ENCODE measurements at regions of chr1 and their contacts with region 1.

Region 1: DNA sequence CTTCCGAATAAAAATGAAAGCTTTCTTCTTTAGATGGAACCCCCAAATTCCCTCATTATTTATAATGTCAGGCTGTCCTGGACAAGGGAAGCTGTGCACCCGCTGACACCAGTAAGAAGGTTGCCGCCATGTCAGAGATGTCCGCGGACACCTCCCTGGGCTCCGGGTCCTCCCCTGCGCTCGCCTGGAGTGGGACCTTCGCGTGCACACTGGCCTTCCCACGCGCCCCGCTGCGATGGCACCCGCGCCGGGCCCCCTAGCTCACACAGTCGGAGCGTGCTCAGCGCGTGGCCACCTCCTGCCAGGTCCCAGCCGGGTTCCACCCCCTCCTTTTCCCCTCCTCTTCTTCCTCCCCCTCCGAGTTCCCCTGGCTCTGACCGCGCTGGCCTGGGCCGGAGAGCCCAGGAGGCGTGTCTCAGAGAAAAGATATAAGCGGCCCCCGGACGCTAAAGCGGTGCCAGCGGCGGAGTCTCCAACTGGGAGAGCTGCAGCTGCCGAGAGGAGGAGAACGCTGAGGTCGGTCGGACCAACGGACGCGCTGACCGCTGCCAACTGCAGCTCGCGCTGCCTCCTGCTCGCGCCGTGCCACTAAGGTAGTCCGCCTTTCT is at the start of gene G0S2:
- DNase-seq: peak; percentile 46
- H3K4me3 Mint-ChIP-seq: peak within 1 kb of the TSS; percentile 80
- H3K27ac Mint-ChIP-seq: peak within 1 kb of the TSS; percentile 57
- H3K4me1 Mint-ChIP-seq: peaks cover 54% of the 10 kb centered on the region
- H3K27me3 Mint-ChIP-seq: peaks cover 30% of the 10 kb centered on the region
- CTCF ChIP-seq: no peak
- total RNA-seq, gene G0S2: 2.4 and 4.0 TPM in 2 replicates

Region 2: GRCh38 chr1:209710093-209710492 is 35.0 kb after region 1 on chr1:
- CTCF ChIA-PET with region 1: no interaction called
- intact Hi-C with region 1: no loop called
- DNase-seq: no peak
- H3K4me3 Mint-ChIP-seq: no peak overlapping the region
- H3K27ac Mint-ChIP-seq: no peak overlapping the region
- H3K4me1 Mint-ChIP-seq: peaks cover 39% of the 10 kb centered on the region
- H3K27me3 Mint-ChIP-seq: no peaks in the 10 kb centered on the region
- CTCF ChIP-seq: no peak

Region 3: DNA sequence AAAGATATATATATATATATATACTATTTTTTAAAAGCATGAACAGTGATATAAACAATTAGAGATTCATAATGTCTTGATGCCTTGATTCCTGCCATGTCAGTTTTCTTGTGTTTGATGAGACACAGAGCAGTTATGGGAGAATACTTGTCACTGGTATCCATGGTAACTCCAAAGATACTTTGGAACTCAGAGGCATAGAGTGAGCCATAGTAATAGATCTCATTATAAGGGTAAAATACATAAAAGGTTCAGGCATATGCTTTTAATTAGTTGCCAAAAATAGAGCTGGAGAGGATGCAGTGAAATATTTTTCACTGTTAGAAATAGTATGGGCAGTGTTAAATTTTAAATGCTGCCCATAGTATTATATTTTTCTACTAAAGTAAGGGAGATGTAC is 397.1 kb after region 1 on chr1:
- CTCF ChIA-PET with region 1: no interaction called
- intact Hi-C with region 1: no loop called
- DNase-seq: no peak
- H3K4me3 Mint-ChIP-seq: no peak overlapping the region
- H3K27ac Mint-ChIP-seq: no peak overlapping the region
- H3K4me1 Mint-ChIP-seq: no peaks in the 10 kb centered on the region
- H3K27me3 Mint-ChIP-seq: no peaks in the 10 kb centered on the region
- CTCF ChIP-seq: no peak

Region 4: DNA sequence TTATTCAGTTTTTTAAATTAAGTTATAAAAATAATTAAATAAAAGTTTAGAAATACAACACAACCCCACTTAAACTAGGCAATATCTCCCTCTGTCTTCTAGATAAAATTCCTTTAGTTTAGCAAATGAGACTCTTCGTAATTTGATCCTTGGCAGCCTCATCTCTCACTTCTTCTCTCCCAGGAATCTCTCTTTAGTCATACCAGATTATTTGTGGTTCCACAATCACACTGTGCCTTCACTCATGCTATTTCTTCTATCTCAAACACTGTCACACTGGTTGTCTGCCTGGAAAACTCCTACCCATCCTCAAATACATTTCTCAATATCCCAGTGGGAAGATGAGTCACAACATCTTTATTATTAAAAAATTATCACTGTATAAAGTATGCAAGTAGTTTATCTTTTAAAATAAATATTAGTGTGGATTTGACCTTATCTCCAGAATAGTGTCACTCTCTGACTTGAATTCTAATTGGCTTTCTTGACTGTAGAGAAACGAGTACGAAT is 1263.4 kb after region 1 on chr1:
- CTCF ChIA-PET with region 1: no interaction called
- intact Hi-C with region 1: loop called (anchors 10 kb)
- DNase-seq: no peak
- H3K4me3 Mint-ChIP-seq: no peak overlapping the region
- H3K27ac Mint-ChIP-seq: no peak overlapping the region
- H3K4me1 Mint-ChIP-seq: no peaks in the 10 kb centered on the region
- H3K27me3 Mint-ChIP-seq: no peaks in the 10 kb centered on the region
- CTCF ChIP-seq: no peak